PC-9 (cell line): ENCODE measurements at regions of chr10 and their contacts with region 1.

Region 1: DNA sequence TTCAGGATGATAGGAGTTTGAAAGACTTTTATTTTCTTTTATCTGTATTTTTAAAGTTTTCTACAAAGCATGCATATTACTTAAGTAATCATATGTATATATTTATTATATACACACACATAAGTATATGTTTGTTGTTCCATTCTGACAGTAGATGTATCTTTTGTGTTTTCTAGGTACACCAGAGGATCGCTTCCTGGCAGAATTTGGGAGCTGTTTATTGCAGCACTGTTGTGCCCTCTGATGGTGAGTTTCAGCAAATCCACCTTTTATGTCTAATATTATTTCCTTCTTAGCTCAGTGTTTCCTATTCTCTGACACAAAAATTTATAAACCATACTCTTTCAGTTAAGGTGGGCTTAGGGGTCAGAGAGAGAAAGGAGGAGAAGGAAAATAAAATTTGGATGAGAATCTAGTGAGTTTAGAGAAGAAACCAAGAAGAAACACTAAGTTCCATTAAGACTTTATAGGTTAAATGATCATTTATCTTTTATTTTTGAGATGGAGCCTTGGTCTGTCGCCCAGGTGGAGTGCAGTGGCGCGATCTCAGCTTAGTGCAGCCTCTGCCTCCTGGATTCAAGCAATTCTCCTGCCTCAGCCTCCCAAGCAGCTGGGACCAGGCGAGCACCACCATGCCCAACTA is 59.2 kb upstream of the OIT3 start:
- DNase-seq: peak; percentile 49 to 62
- H3K4me3 ChIP-seq: no peak overlapping the region
- H3K27ac ChIP-seq: no peak overlapping the region
- H3K4me1 ChIP-seq: 0 out of 2 replicates have a peak, but pooled peaks cover 10% of the 10 kb centered on the region
- H3K27me3 ChIP-seq: no peaks in the 10 kb centered on the region
- CTCF ChIP-seq: peak; percentile 88

Region 2: DNA sequence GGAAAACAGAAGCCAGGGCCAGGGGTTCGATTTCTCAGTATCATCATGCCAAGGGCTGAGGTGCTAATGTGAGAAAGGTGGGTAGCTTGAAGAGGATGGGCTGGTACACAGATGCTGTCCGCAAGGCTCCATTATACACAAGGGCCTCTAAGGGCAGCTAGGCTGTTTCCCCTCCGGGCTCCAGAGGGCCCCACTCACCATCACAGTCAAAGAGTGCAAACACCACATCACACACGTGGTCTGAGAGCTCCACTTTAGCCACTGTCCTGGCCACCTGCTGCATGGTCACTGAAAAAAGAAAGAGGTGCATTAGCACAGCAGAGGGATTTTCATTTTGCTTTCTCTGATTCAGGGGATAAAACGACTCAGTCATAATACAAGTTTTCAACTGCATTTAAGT is 458.7 kb before region 1 on chr10:
- CTCF ChIA-PET with region 1: interaction called, 4 read pairs
- POLR2A ChIA-PET with region 1: no interaction called
- intact Hi-C with region 1: loop called (anchors 5 kb)
- DNase-seq: no peak
- H3K4me3 ChIP-seq: no peak overlapping the region
- H3K27ac ChIP-seq: no peak overlapping the region
- H3K4me1 ChIP-seq: no peaks in the 10 kb centered on the region
- H3K27me3 ChIP-seq: no peaks in the 10 kb centered on the region
- CTCF ChIP-seq: no peak

Region 3: DNA sequence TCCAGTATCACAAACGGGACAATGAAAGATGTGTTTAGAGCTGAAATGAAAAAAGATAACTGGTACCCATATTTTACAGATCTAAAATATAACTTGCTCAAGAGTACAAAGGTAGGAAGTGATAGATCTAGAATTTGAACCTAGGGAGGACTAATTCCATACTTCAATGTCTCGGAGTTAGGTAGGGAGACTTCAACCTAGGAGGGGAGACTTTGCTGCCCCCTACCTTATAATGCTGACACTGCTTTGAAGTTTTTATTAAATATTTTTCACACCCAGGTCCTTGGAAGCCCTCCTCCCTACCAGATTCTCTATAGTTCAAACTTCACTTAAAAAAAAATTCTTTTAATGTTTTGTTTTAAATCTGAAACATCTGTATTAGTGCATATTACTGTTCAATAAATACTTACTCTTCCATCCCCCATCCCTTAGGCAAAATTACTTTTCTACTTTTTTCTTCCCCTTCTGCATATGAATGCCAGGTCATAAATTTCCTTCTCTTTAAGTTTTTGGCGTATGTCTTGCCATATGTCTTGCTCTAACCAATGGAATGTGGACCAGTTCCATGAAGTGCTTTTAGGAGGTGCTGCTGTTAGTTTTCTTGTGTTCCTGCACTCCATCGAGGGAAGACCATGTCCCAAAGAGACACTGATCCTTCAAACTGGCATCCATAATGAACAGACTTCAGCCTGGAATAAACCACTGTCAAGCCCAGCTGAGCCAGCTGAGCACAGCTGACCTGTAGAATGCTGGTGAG is 266.2 kb before region 1 on chr10:
- CTCF ChIA-PET with region 1: interaction called, 3 read pairs
- POLR2A ChIA-PET with region 1: no interaction called
- intact Hi-C with region 1: loop called (anchors 5 kb)
- DNase-seq: no peak
- H3K4me3 ChIP-seq: no peak overlapping the region
- H3K27ac ChIP-seq: no peak overlapping the region
- H3K4me1 ChIP-seq: no peaks in the 10 kb centered on the region
- H3K27me3 ChIP-seq: no peaks in the 10 kb centered on the region
- CTCF ChIP-seq: peak; percentile 57

Region 4: DNA sequence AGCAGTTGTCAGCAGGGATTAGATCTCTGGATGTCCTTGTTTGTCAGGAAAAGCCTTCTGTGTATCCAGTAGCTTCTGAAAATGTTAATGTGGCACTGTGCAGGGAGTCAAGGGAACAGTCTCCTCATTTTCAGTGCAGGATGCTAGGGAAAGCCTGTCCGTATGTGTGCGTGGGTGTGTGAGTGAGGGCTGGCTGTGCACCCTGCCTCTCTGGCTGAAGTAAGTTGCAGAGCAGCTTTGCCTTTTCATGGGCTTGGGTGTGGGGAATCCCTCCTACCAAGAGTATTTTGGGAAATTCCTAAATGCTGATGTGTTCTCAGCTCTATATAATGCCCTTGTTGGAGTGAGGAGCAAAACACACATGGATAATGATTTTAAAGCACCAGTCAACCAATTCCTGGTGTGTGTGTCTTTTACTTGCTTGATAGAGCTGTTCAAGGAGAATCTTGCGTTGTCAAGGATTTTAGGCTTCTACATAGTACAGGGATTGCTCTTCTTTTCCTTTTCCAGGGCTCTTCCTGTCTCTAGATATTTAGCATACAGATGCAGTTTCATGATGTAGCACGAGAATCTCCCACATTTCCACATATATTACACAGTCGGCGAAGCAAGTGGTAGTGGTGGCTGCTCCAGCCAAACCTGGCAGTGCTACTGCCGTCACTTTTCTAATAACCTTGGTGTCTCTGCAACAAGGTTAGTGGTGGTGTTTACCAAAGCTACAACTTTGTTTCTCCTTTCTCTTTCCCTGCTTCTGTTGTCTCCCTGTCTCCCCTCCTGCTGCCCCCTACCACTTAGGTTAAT is 49.6 kb before region 1 on chr10:
- CTCF ChIA-PET with region 1: interaction called, 3 read pairs
- POLR2A ChIA-PET with region 1: interaction called, 3 read pairs
- intact Hi-C with region 1: loop called (anchors 5 kb)
- DNase-seq: peak; percentile 77 to 88
- H3K4me3 ChIP-seq: no peak overlapping the region
- H3K27ac ChIP-seq: peak overlapping the region; percentile 11; the same call in 1 of the 2 replicates
- H3K4me1 ChIP-seq: peaks cover 28% of the 10 kb centered on the region
- H3K27me3 ChIP-seq: no peaks in the 10 kb centered on the region
- CTCF ChIP-seq: no peak